ENCODE measurements at regions of chr9 and their contacts with region 1.

Region 1: DNA sequence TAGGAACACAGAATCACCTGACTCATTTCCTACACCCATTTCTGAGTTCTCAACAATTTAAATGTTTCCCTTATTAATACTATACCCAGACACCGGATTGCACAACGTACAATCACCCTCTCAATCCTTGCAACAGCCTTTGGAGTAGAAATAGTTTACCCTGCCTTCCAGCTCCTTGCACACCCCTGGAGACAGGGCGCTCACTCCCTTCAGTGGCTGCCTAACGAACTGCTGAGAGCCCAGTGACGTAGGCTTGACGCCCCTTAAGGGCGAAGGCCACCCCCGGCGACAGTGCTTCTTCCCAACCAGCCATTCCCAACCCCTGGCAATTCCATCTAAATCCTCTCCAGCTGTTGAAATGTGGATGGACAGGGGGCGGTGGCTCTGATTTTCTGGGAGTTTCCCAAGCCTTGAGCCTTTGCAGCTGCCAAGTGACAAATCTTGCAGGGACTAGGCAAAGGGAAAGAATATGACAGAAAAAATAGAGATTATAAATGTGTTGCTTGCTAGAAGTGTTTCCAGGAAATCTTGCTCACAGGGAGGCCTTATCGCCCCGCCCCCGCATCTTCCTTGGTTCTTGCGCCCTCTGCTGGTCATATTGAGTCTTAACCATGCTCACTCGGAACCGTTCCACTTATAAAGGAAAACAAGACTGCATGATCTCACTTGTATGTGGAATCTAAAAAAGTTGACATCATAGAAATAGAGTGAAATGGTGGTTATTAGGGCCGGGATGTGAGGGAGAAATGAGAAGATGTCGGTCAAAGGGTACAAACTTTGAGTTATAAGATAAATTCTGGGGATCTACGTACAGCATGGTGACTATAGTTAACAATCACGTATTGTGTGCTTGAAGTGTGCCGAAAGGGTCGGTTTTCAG is 7.6 kb upstream of the BARX1 start:
- DNase-seq: peak; percentile 71 to 82 (median 81)
- ATAC-seq: peak; percentile 54 to 88 (median 80)
- H3K4me3 ChIP-seq: peak overlapping the region in 1 of 12 donors; percentile 14
- H3K27ac ChIP-seq: no peak overlapping the region
- H3K4me1 ChIP-seq: peaks cover 3 to 38% (median 24%) of the 10 kb centered on the region in 12 donors
- H3K27me3 ChIP-seq: peaks cover 30 to 69% (median 41%) of the 10 kb centered on the region in 9 donors
- CTCF ChIP-seq: peak; percentile 74 to 90 (median 85)
- POLR2A ChIP-seq: no peak

Region 2: GRCh38 chr9:93159601-93160471 is 803.0 kb before region 1 on chr9:
- intact Hi-C with region 1: loop called in 5 of 10 experiments (anchors 5 to 10 kb)
- DNase-seq: peak; percentile 78 to 91 (median 86)
- ATAC-seq: peak; percentile 80 to 92 (median 90)
- H3K4me3 ChIP-seq: no peak overlapping the region
- H3K27ac ChIP-seq: no peak overlapping the region
- H3K4me1 ChIP-seq: peaks cover 0 to 29% (median 12%) of the 10 kb centered on the region in 12 donors
- H3K27me3 ChIP-seq: no peaks in the 10 kb centered on the region
- CTCF ChIP-seq: peak; percentile 85 to 98 (median 95)
- POLR2A ChIP-seq: no peak

Region 3: DNA sequence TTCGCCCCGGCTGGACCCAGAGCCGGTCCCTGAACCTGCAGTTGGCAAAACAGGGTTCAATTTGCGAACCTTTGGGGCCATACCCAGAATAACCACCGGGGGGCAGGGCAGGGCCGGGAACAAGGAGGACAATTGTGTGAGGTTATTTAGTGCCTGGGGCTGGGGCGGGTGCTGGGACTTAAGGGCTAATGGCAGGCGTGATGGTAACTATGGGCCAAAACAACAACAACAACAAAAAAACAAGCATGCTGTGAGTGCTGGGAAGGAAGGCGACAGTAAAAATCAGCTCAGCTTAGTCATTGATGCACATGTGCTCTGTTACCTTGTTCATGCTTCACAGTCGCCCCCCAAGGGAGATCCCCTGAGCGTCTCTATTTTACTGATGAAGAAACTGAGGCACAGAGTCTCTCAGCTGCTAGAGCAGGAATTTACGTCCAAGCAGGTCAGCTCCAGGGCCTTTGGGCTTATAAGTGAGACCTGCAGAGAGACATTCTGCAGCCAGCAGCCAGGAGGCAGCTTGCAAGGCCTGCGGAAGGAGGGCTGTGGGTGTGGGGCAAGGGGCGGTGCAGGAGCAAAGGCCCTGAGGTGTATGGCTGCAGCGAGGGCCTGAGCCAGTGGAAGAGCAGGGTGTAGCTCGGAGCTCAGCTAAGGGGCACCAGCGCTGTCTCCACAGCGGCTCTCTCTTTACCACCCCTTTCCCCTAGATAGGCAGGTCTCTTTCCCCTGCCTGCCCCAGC is 280.4 kb before region 1 on chr9:
- intact Hi-C with region 1: loop called (anchors 1 to 5 kb)
- DNase-seq: peak; percentile 37 to 82 (median 52)
- ATAC-seq: peak in 3 of 4 donors; percentile 45 to 68 (median 57)
- H3K4me3 ChIP-seq: no peak overlapping the region
- H3K27ac ChIP-seq: no peak overlapping the region
- H3K4me1 ChIP-seq: peaks cover 0 to 5% (median 0%) of the 10 kb centered on the region in 12 donors
- H3K27me3 ChIP-seq: no peaks in the 10 kb centered on the region
- CTCF ChIP-seq: peak; percentile 60 to 82 (median 76)
- POLR2A ChIP-seq: no peak

Region 4: DNA sequence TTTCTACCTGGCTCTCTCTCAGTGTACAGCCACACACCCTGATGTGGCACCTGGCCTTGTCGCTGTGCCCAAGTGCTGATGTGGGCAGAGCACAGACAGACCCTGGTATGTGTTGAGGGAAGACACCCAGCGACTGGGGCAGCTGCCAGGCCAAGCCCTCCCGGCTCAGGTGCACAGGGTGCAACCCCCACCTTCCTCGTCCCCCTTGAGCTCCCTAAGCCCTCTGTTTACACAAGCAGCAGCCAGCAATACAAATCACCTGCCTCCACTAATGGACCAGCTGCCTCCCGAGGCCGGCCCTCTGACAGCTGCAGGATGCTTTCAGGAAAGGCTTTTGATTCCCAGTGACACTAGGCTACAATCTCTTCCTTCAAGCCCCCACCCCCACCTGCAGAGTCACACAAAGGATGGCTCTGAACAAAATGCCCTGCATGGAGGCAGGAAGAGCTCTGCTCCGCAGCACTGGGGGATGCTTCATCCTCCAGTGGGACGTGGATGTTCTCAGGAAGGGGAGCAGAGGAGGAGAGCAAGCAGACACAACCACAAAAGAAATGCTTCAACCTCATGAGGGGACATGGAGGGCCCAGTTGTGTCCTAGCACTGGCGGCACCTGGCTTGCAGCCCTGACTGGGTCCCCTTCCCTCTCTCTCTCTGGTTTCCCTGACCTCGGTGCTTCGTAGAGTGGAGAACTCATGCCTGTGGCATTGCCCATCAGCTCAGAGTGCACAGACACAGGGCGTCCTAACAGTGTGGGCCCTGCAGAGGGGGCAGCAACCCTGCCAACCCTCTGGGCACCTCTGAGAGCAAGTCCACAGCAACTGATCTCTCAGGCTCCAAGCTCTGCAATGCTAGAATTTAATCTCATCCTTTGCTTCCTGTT is 148.5 kb before region 1 on chr9:
- intact Hi-C with region 1: loop called in 1 of 10 experiments (anchors 10 kb)
- DNase-seq: no peak
- ATAC-seq: peak in 1 of 4 donors; percentile 35
- H3K4me3 ChIP-seq: no peak overlapping the region
- H3K27ac ChIP-seq: no peak overlapping the region
- H3K4me1 ChIP-seq: no peaks in the 10 kb centered on the region
- H3K27me3 ChIP-seq: peaks cover 0 to 49% (median 9%) of the 10 kb centered on the region in 9 donors
- CTCF ChIP-seq: peak in 1 of 12 donors; percentile 13
- POLR2A ChIP-seq: no peak

Region 5: DNA sequence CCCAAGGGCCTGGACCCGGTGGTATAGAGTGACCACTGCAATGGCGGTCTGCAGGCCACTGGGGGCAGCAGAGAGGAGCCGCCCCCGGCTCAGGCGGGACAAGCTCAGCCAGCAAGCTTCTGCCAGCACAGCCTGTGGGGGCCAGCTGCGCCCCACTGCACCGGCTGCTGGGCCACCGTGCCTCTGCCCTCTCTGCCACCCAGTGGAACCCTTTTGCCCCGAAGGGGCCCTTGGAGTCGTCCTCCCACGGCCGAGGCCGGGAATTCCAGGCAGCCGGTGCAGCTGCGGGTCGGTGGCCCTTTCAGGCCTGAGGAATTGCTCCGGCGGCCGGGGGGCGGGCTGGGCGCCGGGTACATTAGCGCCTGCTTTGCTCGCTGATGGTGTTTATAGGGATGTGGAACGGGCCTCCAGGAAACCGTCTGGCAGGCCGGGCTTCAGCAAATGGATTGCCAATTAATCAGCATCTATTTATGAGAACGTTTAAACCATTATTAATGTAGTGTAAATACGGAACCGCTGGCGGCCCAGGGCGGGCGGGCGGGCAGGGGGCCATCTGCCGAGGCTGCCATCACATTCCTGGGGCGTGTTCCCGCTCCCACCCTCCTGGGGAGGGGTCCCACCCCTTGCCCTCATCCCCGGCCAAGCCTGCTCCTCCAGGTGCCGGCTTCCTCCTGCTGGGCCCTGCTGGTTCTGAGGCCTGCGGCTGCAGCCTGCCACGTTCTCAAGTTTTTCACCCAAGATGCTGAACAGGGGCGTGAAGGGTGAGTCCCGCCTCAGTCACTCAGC is 135.1 kb before region 1 on chr9:
- intact Hi-C with region 1: loop called in 5 of 10 experiments (anchors 5 to 10 kb)
- DNase-seq: peak in 4 of 5 donors; percentile 42 to 70 (median 56)
- ATAC-seq: peak; percentile 42 to 96 (median 91)
- H3K4me3 ChIP-seq: peak overlapping the region in 10 of 12 donors; percentile 24 to 53 (median 44)
- H3K27ac ChIP-seq: no peak overlapping the region
- H3K4me1 ChIP-seq: peaks cover 0 to 8% (median 4%) of the 10 kb centered on the region in 12 donors
- H3K27me3 ChIP-seq: peaks cover 0 to 48% (median 16%) of the 10 kb centered on the region in 9 donors
- CTCF ChIP-seq: peak; percentile 70 to 90 (median 82)
- POLR2A ChIP-seq: no peak

Region 6: DNA sequence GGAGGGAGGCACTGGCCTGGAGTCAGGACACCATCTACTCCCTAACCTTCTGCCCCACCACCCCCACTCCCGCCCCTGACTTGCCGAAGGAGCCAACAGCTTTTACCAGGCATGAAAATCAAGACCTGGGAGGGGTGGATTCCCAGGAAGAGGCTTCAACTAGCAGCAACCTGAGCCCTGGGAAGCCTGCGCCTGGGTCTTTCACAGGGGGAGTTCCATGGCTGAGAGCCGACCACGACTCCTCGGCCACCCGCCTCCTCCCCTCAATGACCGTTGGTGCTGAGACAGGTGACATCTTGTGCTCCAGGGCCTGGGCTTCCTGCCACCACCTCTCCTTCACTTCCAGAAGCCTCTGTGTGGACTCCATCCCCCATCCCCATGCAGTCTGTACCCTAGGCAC is 44.7 kb before region 1 on chr9:
- intact Hi-C with region 1: no loop called
- DNase-seq: no peak
- ATAC-seq: no peak
- H3K4me3 ChIP-seq: no peak overlapping the region
- H3K27ac ChIP-seq: no peak overlapping the region
- H3K4me1 ChIP-seq: no peaks in the 10 kb centered on the region
- H3K27me3 ChIP-seq: peaks cover 0 to 12% (median 0%) of the 10 kb centered on the region in 9 donors
- CTCF ChIP-seq: no peak
- POLR2A ChIP-seq: no peak

Region 7: DNA sequence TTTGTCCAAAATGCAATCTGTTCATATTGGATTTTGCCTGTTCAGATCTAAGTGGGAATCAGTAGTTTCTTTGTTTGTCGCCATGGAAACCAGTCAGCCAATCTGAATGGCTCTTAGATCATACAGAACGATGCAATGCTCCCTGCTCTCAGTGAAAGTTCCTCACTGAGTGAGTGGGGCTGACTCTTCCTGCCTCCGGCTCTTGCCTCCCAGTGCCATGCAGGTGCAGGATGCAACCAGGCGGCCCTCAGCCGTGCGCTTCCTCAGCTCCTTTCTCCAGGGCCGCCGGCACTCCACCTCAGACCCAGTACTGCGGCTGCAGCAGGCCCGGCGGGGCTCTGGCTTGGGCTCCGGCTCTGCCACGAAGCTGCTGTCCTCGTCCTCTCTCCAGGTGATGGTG is 121.5 kb after region 1 on chr9 and contains the start of gene PTPDC1:
- intact Hi-C with region 1: no loop called
- DNase-seq: peak in 1 of 5 donors; percentile 21
- ATAC-seq: peak in 3 of 4 donors; percentile 42 to 54 (median 52)
- H3K4me3 ChIP-seq: peak within 1 kb of the TSS in 5 of 12 donors; percentile 16 to 43 (median 26)
- H3K27ac ChIP-seq: peak within 1 kb of the TSS in 9 of 12 donors; percentile 15 to 76 (median 53)
- H3K4me1 ChIP-seq: peaks cover 0 to 45% (median 31%) of the 10 kb centered on the region in 12 donors
- H3K27me3 ChIP-seq: no peaks in the 10 kb centered on the region
- CTCF ChIP-seq: no peak
- POLR2A ChIP-seq: no peak
- total RNA-seq, gene PTPDC1: 6.4 to 12.3 (median 9.5) TPM

Measured in heart left ventricle (tissue), 16 donors.